Psoas muscle (tissue), 8 donors: ENCODE measurements at regions of chr3 and their contacts with region 1.

Region 1: DNA sequence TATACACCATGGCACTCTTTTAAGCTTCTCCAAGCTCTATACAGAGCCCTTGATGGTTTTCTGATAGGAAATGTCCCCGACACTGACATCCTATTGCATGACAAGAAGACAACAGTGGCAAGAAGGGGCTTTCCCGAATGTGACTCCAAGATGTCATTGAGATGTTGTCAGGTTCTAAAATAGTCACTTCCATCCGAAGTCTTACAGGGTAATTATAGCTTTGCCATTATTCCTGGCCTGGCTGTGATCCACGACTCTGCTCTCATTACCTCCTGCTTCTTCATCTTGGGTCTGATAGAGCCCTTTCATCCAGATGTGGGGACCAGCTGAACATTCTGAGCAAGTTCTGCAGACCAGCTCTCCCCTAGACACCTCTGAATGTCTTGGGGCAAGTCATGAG is 40.6 kb upstream of the ADAMTS9 start:
- DNase-seq: peak; percentile 15 to 67
- ATAC-seq: peak; percentile 81 to 96 (median 96)
- H3K4me3 ChIP-seq: no peak overlapping the region
- H3K27ac ChIP-seq: peak overlapping the region; percentile 76
- H3K4me1 ChIP-seq: peaks cover 26% of the 10 kb centered on the region
- H3K27me3 ChIP-seq: no peaks in the 10 kb centered on the region
- CTCF ChIP-seq: no peak

Region 2: GRCh38 chr3:64691051-64691450 is 37.4 kb before region 1 on chr3:
- intact Hi-C with region 1: loop called (anchors 5 kb)
- DNase-seq: peak in 1 of 2 donors; percentile 18
- ATAC-seq: peak in 2 of 4 donors; percentile 53 to 55
- H3K4me3 ChIP-seq: no peak overlapping the region
- H3K27ac ChIP-seq: peak overlapping the region; percentile 20
- H3K4me1 ChIP-seq: peaks cover 16% of the 10 kb centered on the region
- H3K27me3 ChIP-seq: no peaks in the 10 kb centered on the region
- CTCF ChIP-seq: no peak

Region 3: GRCh38 chr3:64908292-64908691 is 179.9 kb after region 1 on chr3:
- intact Hi-C with region 1: loop called in 1 of 2 experiments (anchors 5 kb)
- DNase-seq: no peak
- ATAC-seq: peak; percentile 46 to 66 (median 50)
- H3K4me3 ChIP-seq: no peak overlapping the region
- H3K27ac ChIP-seq: no peak overlapping the region
- H3K4me1 ChIP-seq: peaks cover 11% of the 10 kb centered on the region
- H3K27me3 ChIP-seq: no peaks in the 10 kb centered on the region
- CTCF ChIP-seq: no peak